ENCODE measurements at regions of chr10 and their contacts with region 1.

Region 1: GRCh38 chr10:1476455-1476803 is 260.9 kb downstream of the ADARB2 start:
- DNase-seq: no peak
- ATAC-seq: no peak
- H3K4me3 ChIP-seq: no peak overlapping the region
- H3K4me3 Mint-ChIP-seq: no peak overlapping the region
- H3K27ac ChIP-seq: no peak overlapping the region
- H3K27ac Mint-ChIP-seq: no peak overlapping the region
- H3K4me1 ChIP-seq: peaks cover 6 to 18% of the 10 kb centered on the region in 2 donors
- H3K4me1 Mint-ChIP-seq: peaks cover 15% of the 10 kb centered on the region
- H3K27me3 ChIP-seq: peaks cover 0 to 4% (median 0%) of the 10 kb centered on the region in 4 experiments
- H3K27me3 Mint-ChIP-seq: peaks cover 16% of the 10 kb centered on the region
- CTCF ChIP-seq: no peak

Region 2: DNA sequence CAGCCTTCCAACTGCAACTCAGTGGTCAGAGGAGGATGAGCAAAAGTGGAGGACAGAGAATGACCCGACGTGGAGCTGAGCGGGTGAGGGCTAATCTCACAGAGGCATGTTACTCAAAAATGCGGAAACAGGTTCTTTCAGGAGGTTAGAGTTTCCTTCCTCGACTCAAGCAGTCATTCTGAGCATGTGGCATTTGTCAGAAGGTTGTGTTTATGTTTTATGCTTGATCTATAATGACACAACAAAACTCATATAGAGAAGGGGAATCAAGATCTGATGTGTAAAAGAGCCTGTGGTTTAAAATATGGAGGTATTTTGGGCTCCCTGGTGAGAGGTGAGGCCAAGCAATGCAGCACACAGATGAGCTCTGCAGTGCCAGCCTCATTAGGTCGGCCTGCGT is 50.5 kb before region 1 on chr10:
- CTCF ChIA-PET with region 1: no interaction called
- POLR2A ChIA-PET with region 1: interaction called, 10 read pairs
- intact Hi-C with region 1: no loop called
- DNase-seq: peak; percentile 63
- ATAC-seq: peak; percentile 56
- H3K4me3 ChIP-seq: no peak overlapping the region
- H3K4me3 Mint-ChIP-seq: peak overlapping the region; percentile 77
- H3K27ac ChIP-seq: peak overlapping the region; percentile 36 to 65
- H3K27ac Mint-ChIP-seq: peak overlapping the region; percentile 89
- H3K4me1 ChIP-seq: peaks cover 51 to 69% of the 10 kb centered on the region in 2 donors
- H3K4me1 Mint-ChIP-seq: peaks cover 61% of the 10 kb centered on the region
- H3K27me3 ChIP-seq: no peaks in the 10 kb centered on the region
- H3K27me3 Mint-ChIP-seq: no peaks in the 10 kb centered on the region
- CTCF ChIP-seq: no peak

Region 3: DNA sequence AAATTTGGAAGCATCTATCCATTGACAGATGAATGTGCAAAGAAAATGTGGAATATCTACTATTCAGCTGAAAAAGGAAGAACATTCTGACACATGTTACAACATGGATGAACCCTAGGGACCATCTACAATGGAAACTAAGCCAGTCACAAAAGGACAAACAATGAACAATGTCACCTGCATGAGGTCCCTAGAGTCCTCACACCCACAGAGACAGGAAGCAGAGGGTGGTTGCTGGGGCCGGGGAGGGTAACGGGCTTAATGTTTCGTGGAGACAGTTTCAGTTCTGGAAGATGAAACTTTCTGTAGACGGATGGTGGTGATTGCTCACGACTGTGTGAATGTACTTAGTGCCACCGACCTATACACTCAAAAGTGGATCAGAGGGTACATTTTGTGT is 22.0 kb before region 1 on chr10:
- CTCF ChIA-PET with region 1: no interaction called
- POLR2A ChIA-PET with region 1: no interaction called
- intact Hi-C with region 1: no loop called
- DNase-seq: peak; percentile 87
- ATAC-seq: peak; percentile 95
- H3K4me3 ChIP-seq: peak overlapping the region in 3 of 5 experiments; percentile 13 to 44 (median 21)
- H3K4me3 Mint-ChIP-seq: peak overlapping the region; percentile 76
- H3K27ac ChIP-seq: peak overlapping the region; percentile 78 to 81
- H3K27ac Mint-ChIP-seq: peak overlapping the region; percentile 91
- H3K4me1 ChIP-seq: peaks cover 36 to 45% of the 10 kb centered on the region in 2 donors
- H3K4me1 Mint-ChIP-seq: peaks cover 66% of the 10 kb centered on the region
- H3K27me3 ChIP-seq: no peaks in the 10 kb centered on the region
- H3K27me3 Mint-ChIP-seq: no peaks in the 10 kb centered on the region
- CTCF ChIP-seq: no peak